WTC11 (cell line): ENCODE measurements at regions of chr2 and their contacts with region 1.

Region 1: DNA sequence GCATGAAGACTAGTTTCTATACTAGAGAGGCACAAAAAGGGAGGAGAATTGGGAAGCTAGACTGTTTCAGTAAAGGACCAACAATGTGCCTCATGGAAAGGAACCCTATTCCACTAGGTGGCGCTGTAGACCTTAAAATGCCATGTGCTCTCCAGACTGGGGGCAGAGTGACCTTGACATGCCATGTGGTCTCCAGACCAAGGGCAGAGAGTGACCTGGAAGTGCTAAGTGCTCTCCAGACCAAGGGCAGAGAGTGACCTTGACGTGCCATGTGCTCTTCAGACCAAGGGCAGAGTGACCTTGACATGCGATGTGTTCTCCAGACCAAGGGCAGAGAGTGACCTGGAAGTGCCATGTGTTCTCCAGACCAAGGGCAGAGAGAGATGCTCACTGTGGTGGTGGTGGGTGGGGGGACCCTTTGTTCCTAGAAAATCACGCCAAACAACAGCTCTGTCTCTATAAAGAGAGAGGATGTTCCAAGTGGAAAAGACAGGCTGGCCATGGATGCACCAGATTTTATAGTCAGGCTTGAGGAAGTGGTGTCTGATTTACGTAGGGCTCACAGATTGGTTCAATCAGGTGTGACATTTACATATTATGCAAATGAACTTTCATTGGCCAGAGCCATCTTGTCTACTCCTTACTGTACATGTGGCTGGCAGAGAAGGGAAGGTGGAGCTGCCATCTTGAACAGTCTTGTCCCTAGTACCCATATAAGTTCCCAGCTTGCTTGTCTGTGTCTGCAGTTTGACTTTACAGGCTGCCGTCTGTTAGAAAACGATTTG is 344.0 kb upstream of the DDX18 start:
- DNase-seq: peak; percentile 71
- ATAC-seq: peak; percentile 92
- H3K4me3 Mint-ChIP-seq: no peak overlapping the region
- H3K27ac Mint-ChIP-seq: peak overlapping the region; percentile 95
- H3K4me1 Mint-ChIP-seq: peaks cover 19% of the 10 kb centered on the region
- H3K27me3 Mint-ChIP-seq: peaks cover 12% of the 10 kb centered on the region
- CTCF ChIP-seq: peak; percentile 84

Region 2: GRCh38 chr2:117536139-117536538 is 65.6 kb after region 1 on chr2:
- CTCF ChIA-PET with region 1: interaction called, 32 read pairs
- POLR2A ChIA-PET with region 1: no interaction called
- DNase-seq: peak; percentile 28
- ATAC-seq: peak; percentile 96
- H3K4me3 Mint-ChIP-seq: no peak overlapping the region
- H3K27ac Mint-ChIP-seq: no peak overlapping the region
- H3K4me1 Mint-ChIP-seq: peaks cover 27% of the 10 kb centered on the region
- H3K27me3 Mint-ChIP-seq: no peaks in the 10 kb centered on the region
- CTCF ChIP-seq: no peak; the same call in 1 of the 2 replicates

Region 3: DNA sequence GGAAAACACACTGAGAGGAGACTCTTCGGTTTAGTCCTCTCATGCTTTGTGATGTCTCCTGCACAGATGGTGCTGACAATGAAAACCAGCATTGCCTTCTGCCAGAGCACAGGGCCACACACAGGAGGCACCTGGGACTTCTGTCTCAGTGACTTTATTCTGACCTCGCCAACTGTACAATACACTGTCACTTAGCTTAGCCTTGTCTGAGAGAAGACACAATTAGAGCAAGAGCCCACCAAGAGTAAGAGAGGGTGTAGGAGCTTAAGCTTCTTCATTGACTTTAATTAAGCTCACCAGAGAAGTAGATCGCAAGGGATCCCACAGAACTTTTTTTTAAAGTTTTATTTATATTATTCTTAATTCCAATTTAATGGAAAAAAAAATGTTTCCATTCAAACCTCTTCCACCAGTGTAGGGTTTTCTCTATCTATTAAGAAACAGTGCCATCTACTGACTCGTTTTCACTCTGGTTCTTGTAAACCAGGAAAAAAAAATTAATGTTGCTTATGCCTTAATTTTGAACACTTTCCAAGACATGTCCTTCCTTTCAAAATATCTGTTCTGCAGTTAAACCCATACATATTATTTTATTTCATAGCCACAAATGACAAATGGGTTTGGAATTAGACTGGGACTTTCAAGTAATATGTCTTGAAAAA is 301.6 kb after region 1 on chr2:
- CTCF ChIA-PET with region 1: interaction called, 16 read pairs
- POLR2A ChIA-PET with region 1: no interaction called
- DNase-seq: no peak
- ATAC-seq: peak; percentile 41; the same call in 1 of the 2 replicates
- H3K4me3 Mint-ChIP-seq: no peak overlapping the region
- H3K27ac Mint-ChIP-seq: no peak overlapping the region
- H3K4me1 Mint-ChIP-seq: peaks cover 10% of the 10 kb centered on the region
- H3K27me3 Mint-ChIP-seq: peaks cover 3% of the 10 kb centered on the region
- CTCF ChIP-seq: peak; percentile 34; the same call in 1 of the 2 replicates

Region 4: GRCh38 chr2:117785740-117786139 is 315.2 kb after region 1 on chr2:
- CTCF ChIA-PET with region 1: interaction called, 14 read pairs
- POLR2A ChIA-PET with region 1: no interaction called
- DNase-seq: peak; percentile 37
- ATAC-seq: peak; percentile 60
- H3K4me3 Mint-ChIP-seq: no peak overlapping the region
- H3K27ac Mint-ChIP-seq: no peak overlapping the region
- H3K4me1 Mint-ChIP-seq: no peaks in the 10 kb centered on the region
- H3K27me3 Mint-ChIP-seq: peaks cover 3% of the 10 kb centered on the region; the same call in 1 of the 2 replicates
- CTCF ChIP-seq: peak; percentile 58

Region 5: GRCh38 chr2:118065921-118066511 is 595.5 kb after region 1 on chr2:
- CTCF ChIA-PET with region 1: no interaction called
- POLR2A ChIA-PET with region 1: no interaction called
- DNase-seq: no peak
- ATAC-seq: no peak
- H3K4me3 Mint-ChIP-seq: no peak overlapping the region
- H3K27ac Mint-ChIP-seq: no peak overlapping the region
- H3K4me1 Mint-ChIP-seq: peaks cover 2% of the 10 kb centered on the region; the same call in 1 of the 2 replicates
- H3K27me3 Mint-ChIP-seq: no peaks in the 10 kb centered on the region; the same call in 1 of the 2 replicates
- CTCF ChIP-seq: no peak